PC-3 (cell line): ENCODE measurements at regions of chr7 and their contacts with region 1.

Region 1: GRCh38 chr7:151304856-151305255 is 36.8 kb upstream of the NUB1 start:
- DNase-seq: peak; percentile 2
- ATAC-seq: no peak
- H3K4me3 ChIP-seq: no peak overlapping the region
- H3K27ac ChIP-seq: no peak overlapping the region
- H3K4me1 ChIP-seq: peaks cover 3% of the 10 kb centered on the region; the same call in 1 of the 2 replicates
- H3K27me3 ChIP-seq: peaks cover 31% of the 10 kb centered on the region
- CTCF ChIP-seq: no peak

Region 2: GRCh38 chr7:150703209-150703608 is 601.6 kb before region 1 on chr7:
- CTCF ChIA-PET with region 1: no interaction called
- POLR2A ChIA-PET with region 1: no interaction called
- intact Hi-C with region 1: no loop called
- DNase-seq: no peak
- ATAC-seq: no peak
- H3K4me3 ChIP-seq: no peak overlapping the region
- H3K27ac ChIP-seq: no peak overlapping the region
- H3K4me1 ChIP-seq: no peaks in the 10 kb centered on the region
- H3K27me3 ChIP-seq: no peaks in the 10 kb centered on the region
- CTCF ChIP-seq: no peak

Region 3: DNA sequence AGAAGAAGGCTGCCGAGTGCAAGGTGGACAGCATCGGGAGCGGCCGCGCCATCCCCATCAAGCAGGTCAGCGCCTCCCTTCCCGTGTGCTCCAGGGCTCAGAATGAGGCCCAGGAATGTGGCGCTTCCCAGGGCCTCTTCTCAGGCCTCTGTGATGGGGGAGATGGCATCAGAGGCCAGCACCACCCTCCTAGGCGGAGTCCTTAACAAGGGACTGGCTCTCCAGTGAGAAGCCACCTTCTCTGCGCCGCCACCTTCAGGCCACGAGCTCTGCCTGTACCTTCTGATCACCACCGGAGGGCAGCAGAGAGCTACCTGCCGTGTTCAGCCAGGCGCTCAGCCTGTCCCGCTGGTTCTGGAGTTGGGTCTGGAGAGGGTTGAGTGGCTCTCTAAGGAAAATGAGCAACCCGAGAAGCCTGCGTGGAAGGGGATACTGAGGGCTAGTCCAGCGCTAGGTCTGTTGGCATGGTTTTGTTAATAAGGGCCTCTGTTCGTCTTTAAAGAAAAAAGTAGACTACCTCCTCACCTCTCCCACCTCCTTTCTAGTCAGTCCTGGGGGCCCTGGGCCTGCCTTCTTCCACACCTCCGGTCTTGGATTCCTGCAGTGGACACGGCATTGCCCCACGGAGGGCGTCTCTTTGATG is 180.9 kb before region 1 on chr7:
- CTCF ChIA-PET with region 1: no interaction called
- POLR2A ChIA-PET with region 1: no interaction called
- intact Hi-C with region 1: loop called (anchors 2 kb)
- DNase-seq: peak; percentile 86
- ATAC-seq: peak; percentile 94
- H3K4me3 ChIP-seq: no peak overlapping the region
- H3K27ac ChIP-seq: no peak overlapping the region
- H3K4me1 ChIP-seq: no peaks in the 10 kb centered on the region
- H3K27me3 ChIP-seq: no peaks in the 10 kb centered on the region
- CTCF ChIP-seq: peak; percentile 98

Region 4: DNA sequence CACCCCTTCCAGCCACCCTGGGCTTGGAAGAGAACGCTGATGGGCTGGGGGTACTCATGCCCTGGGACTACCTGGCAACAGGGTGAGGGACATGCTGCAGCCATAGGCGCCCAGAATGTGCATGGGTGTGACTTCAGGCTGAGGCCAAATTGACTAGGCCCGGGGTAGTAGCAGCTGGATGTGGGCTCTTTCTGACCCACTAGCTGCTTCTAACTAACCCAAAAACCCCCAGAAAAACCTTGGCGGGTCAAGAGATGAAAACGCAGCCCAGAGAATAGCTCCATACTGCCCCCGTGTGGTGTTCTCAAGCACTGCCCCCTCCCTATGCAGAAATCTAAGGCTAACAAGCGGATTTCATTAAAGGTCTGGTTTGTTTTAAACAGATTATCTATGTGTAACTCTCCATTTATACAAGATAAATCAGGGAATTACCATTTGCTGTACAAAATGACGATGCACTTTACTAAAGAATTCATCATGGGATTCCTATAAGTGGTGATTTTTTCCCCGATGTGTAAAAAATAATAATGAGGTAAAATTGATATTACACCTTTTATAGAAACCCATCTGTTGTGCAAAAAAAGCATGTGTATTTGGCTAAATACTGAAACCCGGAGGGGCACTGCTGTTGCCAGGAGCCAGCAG is 60.5 kb before region 1 on chr7:
- CTCF ChIA-PET with region 1: no interaction called
- POLR2A ChIA-PET with region 1: no interaction called
- intact Hi-C with region 1: loop called (anchors 5 kb)
- DNase-seq: peak; percentile 41
- ATAC-seq: no peak
- H3K4me3 ChIP-seq: no peak overlapping the region
- H3K27ac ChIP-seq: no peak overlapping the region
- H3K4me1 ChIP-seq: peaks cover 4% of the 10 kb centered on the region
- H3K27me3 ChIP-seq: no peaks in the 10 kb centered on the region
- CTCF ChIP-seq: peak; percentile 86